Heart left ventricle (tissue), 16 donors: ENCODE measurements at regions of chr10 and their contacts with region 1.

Region 1: GRCh38 chr10:44343843-44344242 is 41.1 kb downstream of the CXCL12 start:
- DNase-seq: no peak
- ATAC-seq: no peak
- H3K4me3 ChIP-seq: no peak overlapping the region
- H3K27ac ChIP-seq: no peak overlapping the region
- H3K4me1 ChIP-seq: no peaks in the 10 kb centered on the region
- H3K27me3 ChIP-seq: no peaks in the 10 kb centered on the region
- CTCF ChIP-seq: no peak
- POLR2A ChIP-seq: no peak

Region 2: DNA sequence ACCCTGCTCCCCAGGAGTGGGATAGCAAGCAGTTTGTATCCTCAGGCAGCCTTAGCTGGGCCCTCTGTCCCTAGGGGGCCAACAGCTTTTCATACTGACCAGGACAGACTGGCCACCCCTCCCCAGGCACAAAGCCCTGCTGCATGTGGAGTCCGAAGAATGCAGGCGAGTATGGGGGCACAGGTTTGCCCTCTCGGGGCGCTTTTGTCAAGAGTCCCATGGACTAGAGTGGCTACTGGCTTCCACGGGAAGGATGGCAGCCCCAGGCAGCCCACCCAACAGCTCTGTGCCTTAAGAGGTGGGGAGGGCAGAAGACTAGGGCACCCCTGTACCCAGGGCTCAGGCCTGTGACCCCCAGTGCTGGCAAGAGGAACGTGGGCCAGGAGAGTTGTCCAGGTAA is 30.3 kb after region 1 on chr10:
- intact Hi-C with region 1: loop called in 1 of 10 experiments (anchors 2 kb)
- DNase-seq: peak in 1 of 5 donors; percentile 5
- ATAC-seq: no peak
- H3K4me3 ChIP-seq: no peak overlapping the region
- H3K27ac ChIP-seq: no peak overlapping the region
- H3K4me1 ChIP-seq: peaks cover 0 to 21% (median 0%) of the 10 kb centered on the region in 12 donors
- H3K27me3 ChIP-seq: no peaks in the 10 kb centered on the region
- CTCF ChIP-seq: no peak
- POLR2A ChIP-seq: no peak

Region 3: DNA sequence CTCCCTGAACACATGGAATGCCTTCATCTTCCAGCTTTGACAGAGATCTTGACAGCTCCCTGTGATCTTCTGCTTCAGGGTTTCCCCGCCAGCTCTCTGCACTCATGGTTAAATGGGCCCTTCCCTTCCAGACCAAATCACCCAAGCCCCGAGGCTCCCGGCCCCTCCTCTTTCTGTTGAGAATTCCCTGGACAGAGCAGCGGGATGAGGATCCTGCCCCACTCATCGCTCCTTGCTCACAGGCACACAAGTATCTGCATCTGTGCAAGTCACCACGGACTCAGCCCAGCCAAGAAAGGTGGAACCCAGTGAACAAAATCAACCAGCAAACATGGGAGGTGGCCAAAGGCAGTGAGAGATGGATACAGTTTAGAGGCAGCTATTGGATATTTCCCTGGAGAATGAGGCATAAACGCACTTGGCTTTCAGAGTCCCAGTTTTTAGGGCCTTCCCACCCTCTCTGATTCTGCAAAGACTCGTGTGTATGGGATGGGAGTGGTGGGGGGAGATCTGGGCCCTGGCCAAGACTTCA is 78.8 kb after region 1 on chr10:
- intact Hi-C with region 1: loop called in 1 of 10 experiments (anchors 10 kb)
- DNase-seq: peak in 1 of 5 donors; percentile 33
- ATAC-seq: peak in 2 of 4 donors; percentile 8 to 24
- H3K4me3 ChIP-seq: no peak overlapping the region
- H3K27ac ChIP-seq: no peak overlapping the region
- H3K4me1 ChIP-seq: no peaks in the 10 kb centered on the region
- H3K27me3 ChIP-seq: no peaks in the 10 kb centered on the region
- CTCF ChIP-seq: no peak
- POLR2A ChIP-seq: no peak